Esophagus squamous epithelium (tissue), 5 donors: ENCODE measurements at regions of chr2 and their contacts with region 1.

Region 1: DNA sequence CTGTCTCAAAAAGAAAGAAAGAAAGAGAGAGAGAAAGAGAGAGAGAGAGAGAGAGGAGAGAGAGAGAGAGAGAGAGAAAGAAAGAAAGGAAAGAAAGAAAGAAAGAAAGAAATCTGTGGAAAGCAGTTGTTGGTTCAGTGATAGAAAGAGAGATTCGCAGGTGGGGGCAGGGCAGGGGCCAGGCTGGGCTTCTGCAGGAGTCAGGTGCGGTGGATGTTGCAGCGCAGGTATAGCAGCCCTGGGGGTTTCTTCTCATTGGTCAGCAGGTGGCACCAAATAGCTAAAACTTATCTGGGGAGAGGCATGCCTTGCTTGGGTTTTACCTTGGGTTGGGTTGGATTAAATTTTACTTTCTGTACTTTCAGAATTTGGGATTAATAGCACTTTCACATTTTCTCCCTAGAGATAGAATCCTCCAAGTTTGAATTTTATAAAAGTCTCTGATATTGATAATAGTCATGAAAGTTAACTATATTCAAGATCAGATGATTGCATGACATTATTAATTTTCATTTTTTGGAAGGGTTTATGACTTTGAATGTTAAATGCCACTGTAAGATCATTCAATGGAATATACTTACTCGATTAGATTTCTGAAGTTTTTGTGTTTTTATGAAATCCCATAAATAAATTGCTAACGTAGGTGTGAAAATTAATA is 66.6 kb downstream of the SPTBN1 start:
- DNase-seq: no peak
- H3K4me3 ChIP-seq: no peak overlapping the region
- H3K27ac ChIP-seq: no peak overlapping the region
- H3K4me1 ChIP-seq: peaks cover 6 to 35% (median 14%) of the 10 kb centered on the region in 3 donors
- H3K27me3 ChIP-seq: no peaks in the 10 kb centered on the region
- CTCF ChIP-seq: peak; percentile 59 to 85 (median 68)
- POLR2A ChIP-seq: no peak

Region 2: DNA sequence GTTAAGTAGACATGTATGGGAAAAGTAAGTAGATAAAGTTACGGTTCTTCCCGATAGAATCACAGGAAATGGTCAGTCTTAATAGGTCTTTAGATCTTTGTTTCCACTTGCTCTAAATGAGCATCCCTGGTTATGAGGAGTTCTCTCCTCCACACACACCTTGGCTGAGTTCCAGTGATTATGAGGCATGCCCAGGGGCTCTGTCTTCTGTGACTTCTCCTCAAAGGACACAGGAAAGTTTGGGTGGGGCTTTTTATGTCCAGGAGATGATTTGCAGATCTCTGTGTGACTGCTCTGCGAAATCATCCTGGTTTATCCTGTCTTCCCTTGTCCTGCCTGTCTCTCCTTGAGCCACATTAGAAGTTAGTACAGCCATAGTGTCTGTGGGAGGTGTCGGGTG is 116.9 kb after region 1 on chr2:
- intact Hi-C with region 1: loop called (anchors 10 kb)
- DNase-seq: no peak
- H3K4me3 ChIP-seq: no peak overlapping the region
- H3K27ac ChIP-seq: peak overlapping the region in 1 of 4 donors; percentile 2
- H3K4me1 ChIP-seq: peaks cover 0 to 55% (median 14%) of the 10 kb centered on the region in 3 donors
- H3K27me3 ChIP-seq: no peaks in the 10 kb centered on the region
- CTCF ChIP-seq: no peak
- POLR2A ChIP-seq: no peak

Region 3: GRCh38 chr2:54704688-54705605 is 182.2 kb after region 1 on chr2:
- intact Hi-C with region 1: loop called (anchors 10 kb)
- DNase-seq: no peak
- H3K4me3 ChIP-seq: no peak overlapping the region
- H3K27ac ChIP-seq: no peak overlapping the region
- H3K4me1 ChIP-seq: peaks cover 6 to 17% (median 6%) of the 10 kb centered on the region in 3 donors
- H3K27me3 ChIP-seq: peaks cover 0 to 13% (median 0%) of the 10 kb centered on the region in 4 donors
- CTCF ChIP-seq: peak in 5 of 6 experiments; percentile 54 to 77 (median 64)
- POLR2A ChIP-seq: no peak

Region 4: DNA sequence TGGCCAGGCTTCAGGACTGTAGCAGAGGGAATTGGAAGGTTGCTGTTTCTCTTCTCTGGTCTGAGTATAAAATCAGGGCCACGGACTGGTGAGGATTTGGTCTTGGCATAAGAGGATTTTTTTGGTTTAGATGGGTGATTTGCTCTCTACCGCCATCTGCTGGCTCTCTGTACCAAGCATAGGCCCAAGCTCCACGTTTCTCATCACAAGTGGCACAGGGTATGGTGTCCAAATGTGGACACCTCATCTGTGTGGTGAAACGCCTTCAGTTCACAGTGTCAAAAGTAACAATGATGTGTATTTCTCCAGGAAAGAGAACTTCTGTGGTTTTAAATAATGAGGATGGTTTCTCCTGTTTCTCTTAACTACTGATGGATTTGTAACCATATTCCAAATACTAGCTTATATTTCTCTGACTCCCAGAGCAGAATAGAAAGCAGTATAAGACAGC is 315.9 kb after region 1 on chr2:
- intact Hi-C with region 1: loop called (anchors 10 kb)
- DNase-seq: no peak
- H3K4me3 ChIP-seq: no peak overlapping the region
- H3K27ac ChIP-seq: no peak overlapping the region
- H3K4me1 ChIP-seq: peaks cover 0 to 7% (median 0%) of the 10 kb centered on the region in 3 donors
- H3K27me3 ChIP-seq: no peaks in the 10 kb centered on the region
- CTCF ChIP-seq: peak; percentile 77 to 91 (median 84)
- POLR2A ChIP-seq: no peak